GM10248 (cell line): ENCODE measurements at regions of chr7 and their contacts with region 1.

Region 1: DNA sequence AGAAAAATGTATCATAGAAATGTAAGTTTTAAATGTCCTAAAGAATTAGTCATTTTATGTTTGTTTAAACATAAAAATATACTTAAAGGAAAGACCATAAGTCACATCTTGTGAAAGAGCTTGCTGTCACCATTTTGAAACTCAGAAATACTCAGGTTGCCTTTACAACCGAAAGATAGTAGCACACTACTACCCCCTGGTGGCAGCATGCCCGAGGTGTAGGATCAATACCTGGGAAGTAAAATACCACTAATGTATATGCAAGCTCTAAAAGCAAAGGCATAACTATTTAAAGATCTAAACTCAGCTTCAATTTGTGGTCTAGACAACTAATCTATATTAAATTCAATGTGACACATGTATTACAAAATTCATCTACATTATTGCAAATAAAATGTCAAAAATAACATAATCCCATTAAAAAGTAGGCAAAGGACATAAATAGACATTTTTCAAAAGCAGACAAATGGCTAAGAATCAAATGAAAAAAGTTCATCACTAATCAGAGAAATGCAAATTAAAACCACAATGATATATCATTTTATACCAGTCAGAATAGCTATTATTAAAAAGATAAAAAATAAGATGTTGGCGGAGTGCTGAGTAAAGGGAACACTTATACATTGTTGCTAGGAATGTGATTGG is 47.7 kb upstream of the FGL2 start:
- DNase-seq: peak; percentile 66
- CTCF ChIP-seq: peak; percentile 76

Region 2: DNA sequence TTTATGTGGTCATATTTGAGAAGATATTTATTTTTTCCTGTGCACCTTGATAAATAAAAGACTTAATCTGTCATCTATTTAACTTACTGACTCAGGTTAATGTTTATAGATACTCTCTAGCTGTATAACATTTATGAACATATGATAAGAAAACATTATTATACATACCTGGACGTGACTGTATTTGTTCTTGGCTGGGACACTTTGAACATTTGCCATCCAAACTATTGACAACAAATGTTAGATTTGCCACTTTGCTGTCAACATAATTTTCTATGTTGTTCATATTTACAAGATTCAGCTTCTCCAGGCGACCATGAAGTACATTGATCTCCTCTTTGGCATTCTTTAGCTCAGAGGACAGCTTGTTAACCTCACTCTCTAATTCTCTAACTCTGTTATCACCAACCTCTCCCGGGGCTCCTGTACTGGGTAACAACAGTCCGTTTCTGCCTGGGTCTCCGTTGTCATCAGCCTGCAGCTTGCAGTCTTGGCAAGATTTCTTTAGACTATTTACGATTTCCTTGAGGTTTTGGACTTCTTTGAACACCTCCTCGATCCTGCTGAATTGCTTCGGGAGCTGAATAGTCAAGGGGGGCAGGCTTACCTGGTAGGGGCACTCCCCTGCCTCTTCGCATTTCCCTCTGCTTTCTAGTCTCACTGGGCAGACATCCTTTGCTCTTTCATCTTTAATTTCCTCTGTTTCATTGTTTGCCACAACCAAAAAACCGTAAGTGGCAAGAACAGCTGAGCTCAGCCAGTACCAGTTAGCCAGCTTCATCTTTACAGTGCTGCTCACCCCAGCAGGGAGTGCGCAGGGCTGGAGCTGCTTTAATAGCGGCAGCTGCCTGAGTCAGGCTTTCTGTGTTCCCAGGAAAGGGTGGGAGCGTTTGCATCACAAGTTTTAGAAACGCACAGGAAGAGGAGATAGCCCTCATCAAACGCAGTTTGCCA is 48.0 kb before region 1 on chr7 and contains the start of gene FGL2:
- CTCF ChIA-PET with region 1: interaction called, 29 read pairs
- POLR2A ChIA-PET with region 1: no interaction called
- DNase-seq: no peak
- CTCF ChIP-seq: no peak

Region 3: DNA sequence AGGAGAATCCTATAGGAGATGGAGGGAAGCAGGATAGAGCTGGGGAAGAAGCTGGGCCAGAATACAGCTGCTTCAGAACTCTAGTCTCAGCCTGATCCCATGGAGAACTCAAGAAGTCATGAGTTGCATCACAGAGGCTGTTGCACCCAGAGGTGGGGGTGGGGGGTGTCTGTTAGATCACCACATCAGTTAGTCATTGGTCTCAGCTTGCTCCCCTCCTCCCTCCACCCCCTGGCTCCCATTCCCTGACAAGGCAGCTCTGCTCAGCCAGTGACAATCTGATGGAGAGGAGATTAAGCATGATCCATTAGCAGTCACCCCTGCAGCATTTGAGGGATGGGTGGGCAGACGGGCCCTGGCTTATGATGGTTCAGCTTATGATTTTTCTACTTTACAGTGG is 10.7 kb after region 1 on chr7:
- CTCF ChIA-PET with region 1: interaction called, 45 read pairs
- POLR2A ChIA-PET with region 1: no interaction called
- DNase-seq: no peak
- CTCF ChIP-seq: no peak

Region 4: GRCh38 chr7:77276120-77276519 is 28.8 kb after region 1 on chr7:
- CTCF ChIA-PET with region 1: interaction called, 31 read pairs
- POLR2A ChIA-PET with region 1: no interaction called
- DNase-seq: no peak
- CTCF ChIP-seq: no peak

Region 5: DNA sequence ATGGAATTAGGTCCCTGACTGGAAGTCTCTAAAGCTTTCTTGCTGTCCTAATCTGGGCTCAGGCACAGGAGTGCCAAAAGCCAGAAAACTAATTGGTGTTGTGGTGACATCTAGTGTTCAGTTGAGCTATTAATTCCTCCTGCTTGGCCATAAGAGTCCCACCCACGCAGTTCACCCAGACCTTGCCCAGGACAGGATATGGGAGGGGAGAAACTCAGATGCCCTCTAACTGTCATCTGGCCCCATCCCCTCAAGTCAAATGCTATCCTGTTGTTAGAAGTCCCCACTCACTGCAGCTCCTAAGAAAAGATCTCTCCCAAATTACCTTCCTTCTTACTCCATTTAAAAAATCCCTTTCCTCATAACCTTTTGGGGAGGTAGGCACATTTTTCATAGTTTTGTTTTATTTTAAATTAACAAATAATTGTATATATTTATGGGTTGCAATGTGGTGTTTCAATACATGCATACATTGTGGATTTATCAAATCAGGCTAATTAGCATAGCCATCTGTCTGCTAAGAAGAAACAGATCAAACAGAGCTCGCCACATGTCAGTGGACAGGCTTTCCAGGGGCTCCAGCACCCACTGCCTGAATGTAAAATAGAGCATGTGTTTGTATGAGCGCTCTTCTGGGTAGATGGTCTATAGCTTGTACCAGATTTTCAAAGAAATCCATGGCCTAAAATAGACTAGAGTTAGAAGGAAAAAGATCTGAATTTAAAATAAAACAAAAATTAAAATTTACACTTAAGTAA is 84.8 kb after region 1 on chr7:
- CTCF ChIA-PET with region 1: interaction called, 28 read pairs
- POLR2A ChIA-PET with region 1: no interaction called
- DNase-seq: peak; percentile 81
- CTCF ChIP-seq: peak; percentile 57